T-cell (primary cell): ENCODE measurements at regions of chr1 and their contacts with region 1.

Region 1: DNA sequence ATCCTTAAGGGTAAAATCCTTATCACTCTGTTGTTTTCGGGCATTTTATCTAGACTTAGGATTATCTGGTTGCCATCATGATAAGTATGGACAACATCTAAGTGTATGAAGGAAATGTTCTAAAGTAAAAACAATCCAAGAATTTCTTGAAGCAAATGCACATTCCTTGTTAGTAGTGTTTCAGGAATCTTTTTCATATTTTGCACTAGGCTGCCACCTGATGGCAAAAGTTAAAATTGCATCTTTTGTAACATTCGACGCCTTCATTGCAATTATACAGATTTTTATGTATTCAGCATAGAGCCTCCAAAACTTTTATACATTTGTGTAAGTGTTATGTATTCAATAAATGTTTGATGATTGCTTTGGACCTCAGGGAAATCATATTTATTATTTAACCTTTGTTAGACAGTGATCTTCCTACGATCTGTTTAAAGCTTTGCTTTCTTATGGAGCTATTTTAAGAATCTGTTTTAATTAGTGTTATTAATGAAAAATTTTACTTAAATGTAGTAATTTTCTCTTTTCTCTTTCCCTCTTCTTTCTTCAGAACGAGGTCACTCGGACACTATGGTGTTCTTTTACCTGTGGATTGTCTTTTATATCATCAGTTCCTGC is 49.4 kb upstream of the KIAA1614 start:
- DNase-seq: peak in 6 of 35 experiments; percentile 2 to 70 (median 4)
- ATAC-seq: no peak
- H3K4me3 ChIP-seq: no peak overlapping the region
- H3K4me3 Mint-ChIP-seq: no peak overlapping the region
- H3K27ac ChIP-seq: no peak overlapping the region
- H3K27ac Mint-ChIP-seq: no peak overlapping the region
- H3K4me1 ChIP-seq: no peaks in the 10 kb centered on the region
- H3K4me1 Mint-ChIP-seq: no peaks in the 10 kb centered on the region
- H3K27me3 ChIP-seq: no peaks in the 10 kb centered on the region
- H3K27me3 Mint-ChIP-seq: no peaks in the 10 kb centered on the region

Region 2: DNA sequence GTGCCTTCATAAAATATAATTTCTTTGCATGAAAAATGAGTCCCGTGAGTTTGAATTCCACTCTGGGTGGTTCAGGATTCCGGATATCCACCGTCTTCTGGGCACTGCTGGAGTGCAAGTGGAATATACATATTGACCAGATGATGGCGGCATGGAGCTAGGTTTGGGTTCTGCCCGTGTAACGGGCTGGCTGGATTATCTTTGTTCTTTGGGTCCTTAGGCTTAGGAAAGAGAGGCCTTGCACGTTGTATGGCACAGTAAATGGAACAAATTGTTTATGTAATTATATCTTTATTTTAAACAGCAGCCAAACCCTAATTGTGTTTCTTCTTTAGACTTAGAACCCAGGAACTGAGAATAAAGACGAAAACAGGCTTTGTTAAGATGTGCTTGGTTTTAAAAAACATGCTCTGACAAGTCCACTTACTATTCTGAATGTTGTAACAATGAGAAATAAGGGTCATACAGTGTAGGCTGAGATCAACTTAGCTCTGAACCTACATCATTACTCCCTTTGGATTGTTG is 347.3 kb before region 1 on chr1:
- CTCF ChIA-PET with region 1: interaction called, 54 to 93 read pairs
- POLR2A ChIA-PET with region 1: interaction called, 3 read pairs
- DNase-seq: peak in 33 of 35 experiments; percentile 5 to 81 (median 38)
- ATAC-seq: peak; percentile 77 to 90 (median 83)
- H3K4me3 ChIP-seq: no peak overlapping the region
- H3K4me3 Mint-ChIP-seq: no peak overlapping the region
- H3K27ac ChIP-seq: no peak overlapping the region
- H3K27ac Mint-ChIP-seq: no peak overlapping the region
- H3K4me1 ChIP-seq: no peaks in the 10 kb centered on the region
- H3K4me1 Mint-ChIP-seq: peaks cover 0 to 2% (median 1%) of the 10 kb centered on the region in 3 donors
- H3K27me3 ChIP-seq: peaks cover 0 to 5% of the 10 kb centered on the region in 2 experiments
- H3K27me3 Mint-ChIP-seq: peaks cover 13 to 20% of the 10 kb centered on the region in 2 donors

Region 3: DNA sequence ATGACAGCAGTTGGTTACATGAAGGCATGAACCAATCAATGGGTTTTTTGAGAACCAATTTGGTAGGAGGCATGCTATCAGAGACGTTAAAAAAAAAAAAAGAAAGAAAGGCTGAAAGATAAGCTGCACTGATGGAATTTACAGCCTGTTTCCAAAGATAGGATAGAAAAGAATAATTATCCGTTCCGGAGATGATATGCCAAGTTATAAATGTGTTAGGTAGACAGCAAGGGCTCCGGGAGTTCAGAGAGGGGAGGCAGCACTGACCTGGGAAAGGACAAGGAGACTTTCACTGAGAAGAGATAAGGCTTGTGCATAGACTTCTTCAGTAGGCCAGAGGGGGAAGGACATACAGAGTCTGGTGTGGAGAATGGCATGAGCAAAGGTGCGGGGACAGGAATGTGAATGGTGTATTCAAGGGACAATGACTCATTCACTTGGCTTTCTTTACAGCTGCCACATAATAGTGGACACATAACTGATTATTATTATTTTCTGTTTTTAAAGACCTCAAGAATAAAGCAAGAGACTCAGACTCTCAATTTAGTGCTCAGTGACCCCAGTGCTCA is 336.1 kb before region 1 on chr1:
- CTCF ChIA-PET with region 1: interaction called, 5 to 11 read pairs
- POLR2A ChIA-PET with region 1: interaction called in 1 of 2 experiments, 7 read pairs
- DNase-seq: no peak
- ATAC-seq: no peak
- H3K4me3 ChIP-seq: no peak overlapping the region
- H3K4me3 Mint-ChIP-seq: no peak overlapping the region
- H3K27ac ChIP-seq: no peak overlapping the region
- H3K27ac Mint-ChIP-seq: no peak overlapping the region
- H3K4me1 ChIP-seq: no peaks in the 10 kb centered on the region
- H3K4me1 Mint-ChIP-seq: peaks cover 0 to 3% (median 3%) of the 10 kb centered on the region in 3 donors
- H3K27me3 ChIP-seq: peaks cover 0 to 3% of the 10 kb centered on the region in 2 experiments
- H3K27me3 Mint-ChIP-seq: peaks cover 0 to 3% of the 10 kb centered on the region in 2 donors

Region 4: DNA sequence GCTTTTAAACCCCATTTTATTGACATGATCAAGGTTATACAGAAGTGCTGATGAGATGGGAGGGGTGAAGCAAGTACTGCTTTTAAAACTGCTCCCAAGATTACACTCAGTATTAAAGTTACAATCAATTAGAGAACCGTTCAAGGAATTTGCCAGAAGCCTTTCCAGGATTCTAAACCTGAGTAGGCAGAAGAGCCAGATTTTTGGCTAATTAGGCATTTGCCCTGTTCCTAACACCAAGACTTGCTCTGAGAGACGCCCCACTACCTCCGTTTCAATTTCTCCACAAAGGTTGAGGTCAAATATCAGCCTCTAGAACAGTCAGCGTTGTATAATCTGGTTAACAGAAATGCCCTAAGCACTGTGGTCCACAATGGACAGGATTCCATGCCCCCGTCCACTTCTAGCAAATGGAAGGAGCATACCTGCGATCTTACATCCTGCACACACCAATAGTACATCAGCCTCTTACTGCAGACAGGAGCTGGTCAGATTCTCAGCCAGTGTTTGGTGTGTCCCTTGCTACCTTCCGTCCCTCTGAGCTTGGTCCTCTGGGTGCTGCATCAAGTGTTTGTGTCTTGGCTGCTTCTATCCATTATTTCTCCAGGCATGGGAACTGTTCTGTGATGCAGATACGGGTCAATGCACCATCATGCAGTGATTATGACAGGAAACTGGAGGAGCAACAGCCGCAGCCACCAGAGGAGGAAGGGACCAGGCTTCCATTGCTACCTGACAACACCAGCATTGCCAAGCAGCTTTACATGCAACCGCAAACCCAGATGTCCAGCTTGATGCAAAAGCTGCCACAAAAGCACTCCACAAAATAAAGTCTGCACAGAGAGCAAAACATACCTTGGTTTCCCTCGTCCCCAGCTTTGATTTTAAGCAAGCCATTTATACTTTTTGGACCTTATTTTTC is 326.6 kb before region 1 on chr1:
- CTCF ChIA-PET with region 1: interaction called, 5 to 16 read pairs
- POLR2A ChIA-PET with region 1: no interaction called
- DNase-seq: no peak
- ATAC-seq: no peak
- H3K4me3 ChIP-seq: no peak overlapping the region
- H3K4me3 Mint-ChIP-seq: no peak overlapping the region
- H3K27ac ChIP-seq: no peak overlapping the region
- H3K27ac Mint-ChIP-seq: no peak overlapping the region
- H3K4me1 ChIP-seq: no peaks in the 10 kb centered on the region
- H3K4me1 Mint-ChIP-seq: no peaks in the 10 kb centered on the region
- H3K27me3 ChIP-seq: peaks cover 0 to 8% of the 10 kb centered on the region in 2 experiments
- H3K27me3 Mint-ChIP-seq: peaks cover 0 to 11% of the 10 kb centered on the region in 2 donors

Region 5: GRCh38 chr1:180691301-180691913 is 171.9 kb before region 1 on chr1:
- CTCF ChIA-PET with region 1: interaction called in 1 of 2 experiments, 10 read pairs
- POLR2A ChIA-PET with region 1: no interaction called
- DNase-seq: no peak
- ATAC-seq: no peak
- H3K4me3 ChIP-seq: no peak overlapping the region
- H3K4me3 Mint-ChIP-seq: no peak overlapping the region
- H3K27ac ChIP-seq: no peak overlapping the region
- H3K27ac Mint-ChIP-seq: no peak overlapping the region
- H3K4me1 ChIP-seq: peaks cover 0 to 3% of the 10 kb centered on the region in 2 experiments
- H3K4me1 Mint-ChIP-seq: peaks cover 35 to 40% (median 36%) of the 10 kb centered on the region in 3 donors
- H3K27me3 ChIP-seq: no peaks in the 10 kb centered on the region
- H3K27me3 Mint-ChIP-seq: no peaks in the 10 kb centered on the region